CD4-positive, alpha-beta T cell (primary cell): ENCODE measurements at regions of chr1 and their contacts with region 1.

Region 1: DNA sequence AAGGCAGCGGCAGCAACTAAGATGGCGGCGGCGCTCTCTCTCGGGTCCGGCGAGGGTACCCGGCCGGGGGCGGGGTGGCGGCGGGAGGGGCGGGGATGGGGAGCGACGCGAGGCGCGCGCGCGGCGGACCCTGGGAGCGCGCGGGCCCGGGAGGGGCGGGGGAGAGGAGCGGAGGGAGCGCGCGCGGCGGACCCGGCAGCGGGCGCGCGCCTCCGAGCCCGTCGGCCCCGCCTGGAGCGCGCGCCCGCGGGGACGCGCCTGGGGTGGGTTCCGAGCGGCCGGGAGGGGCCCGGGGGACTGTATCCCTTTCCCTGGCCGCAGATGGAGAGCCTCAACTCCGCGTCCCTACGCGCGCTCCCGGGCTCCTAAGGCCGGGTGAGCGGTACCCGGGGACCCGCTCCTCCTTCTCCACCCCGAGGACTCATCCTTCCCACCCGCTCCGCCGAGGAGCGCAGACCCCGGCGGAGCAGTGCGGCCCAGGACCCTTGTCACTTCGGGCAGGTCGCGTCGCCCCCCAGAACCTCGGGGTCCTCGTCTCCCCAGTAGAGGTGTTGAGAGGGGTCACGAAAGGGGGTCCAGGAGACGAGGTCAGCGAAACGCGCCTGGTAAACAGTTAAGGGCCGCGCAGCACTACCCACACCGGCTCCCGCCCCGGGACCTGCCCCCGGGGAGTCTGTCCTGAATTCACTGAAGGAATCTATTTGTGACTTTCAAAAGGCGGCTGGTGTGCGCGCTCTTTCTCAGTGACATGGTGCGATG is at the start of gene CLSTN1:
- DNase-seq: peak; percentile 86 to 94 (median 90)
- ATAC-seq: peak; percentile 74
- H3K4me3 ChIP-seq: peak within 1 kb of the TSS; percentile 87
- H3K4me3 Mint-ChIP-seq: peak within 1 kb of the TSS; percentile 99
- H3K27ac ChIP-seq: peak within 1 kb of the TSS; percentile 57 to 67
- H3K27ac Mint-ChIP-seq: peak within 1 kb of the TSS; percentile 94
- H3K4me1 ChIP-seq: peaks cover 40% of the 10 kb centered on the region
- H3K4me1 Mint-ChIP-seq: peaks cover 43% of the 10 kb centered on the region
- H3K27me3 ChIP-seq: no peaks in the 10 kb centered on the region
- H3K27me3 Mint-ChIP-seq: no peaks in the 10 kb centered on the region
- CTCF ChIP-seq: no peak
- total RNA-seq, gene CLSTN1: 66.8 to 68.1 TPM

Region 2: DNA sequence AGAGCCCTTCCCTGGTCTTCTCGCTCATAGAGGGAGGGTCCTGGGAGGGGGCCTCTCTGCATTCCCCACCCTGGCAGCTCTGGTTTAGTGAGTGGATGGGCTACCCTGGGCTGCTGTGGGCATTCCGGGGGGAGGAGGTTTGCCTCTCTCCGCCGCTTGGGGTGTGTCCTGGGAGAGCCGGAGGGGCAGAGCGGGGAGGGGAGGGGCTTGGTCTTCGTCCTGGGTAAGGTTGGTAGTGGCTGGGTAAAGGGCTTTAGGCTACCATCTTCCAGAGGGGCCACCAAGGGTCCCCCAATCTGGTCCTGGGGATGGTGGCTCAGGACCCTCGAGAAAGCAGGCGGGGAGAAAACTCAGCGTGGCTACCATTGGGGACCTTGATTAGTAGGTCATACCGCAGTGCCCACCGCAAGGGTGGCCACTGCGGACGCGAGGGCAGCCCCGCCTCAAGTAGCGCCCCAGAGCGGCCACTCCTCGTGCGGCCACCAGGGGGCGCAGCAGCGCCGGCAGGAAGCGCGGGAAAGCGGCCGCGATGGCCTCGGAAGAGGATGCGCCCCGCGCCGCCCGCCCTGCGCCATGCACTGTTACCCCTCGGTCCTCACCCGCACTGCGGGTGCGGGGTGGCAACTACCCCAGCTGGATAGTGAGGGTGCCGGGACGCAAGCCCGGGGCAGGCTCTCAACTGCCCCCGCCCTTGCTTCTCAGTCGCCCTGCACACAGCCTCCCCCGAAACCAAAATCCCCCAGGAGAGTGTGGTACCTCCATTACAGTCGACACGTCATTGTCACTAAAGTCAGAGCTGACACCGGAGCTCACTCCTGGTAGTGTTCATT is 329.0 kb before region 1 on chr1:
- CTCF ChIA-PET with region 1: no interaction called
- POLR2A ChIA-PET with region 1: no interaction called
- intact Hi-C with region 1: no loop called
- DNase-seq: peak; percentile 40 to 86 (median 57)
- ATAC-seq: peak; percentile 86
- H3K4me3 ChIP-seq: peak overlapping the region; percentile 43
- H3K4me3 Mint-ChIP-seq: peak overlapping the region; percentile 72
- H3K27ac ChIP-seq: no peak overlapping the region
- H3K27ac Mint-ChIP-seq: no peak overlapping the region
- H3K4me1 ChIP-seq: peaks cover 13% of the 10 kb centered on the region
- H3K4me1 Mint-ChIP-seq: peaks cover 6% of the 10 kb centered on the region
- H3K27me3 ChIP-seq: no peaks in the 10 kb centered on the region
- H3K27me3 Mint-ChIP-seq: peaks cover 4% of the 10 kb centered on the region
- CTCF ChIP-seq: peak; percentile 93

Region 3: DNA sequence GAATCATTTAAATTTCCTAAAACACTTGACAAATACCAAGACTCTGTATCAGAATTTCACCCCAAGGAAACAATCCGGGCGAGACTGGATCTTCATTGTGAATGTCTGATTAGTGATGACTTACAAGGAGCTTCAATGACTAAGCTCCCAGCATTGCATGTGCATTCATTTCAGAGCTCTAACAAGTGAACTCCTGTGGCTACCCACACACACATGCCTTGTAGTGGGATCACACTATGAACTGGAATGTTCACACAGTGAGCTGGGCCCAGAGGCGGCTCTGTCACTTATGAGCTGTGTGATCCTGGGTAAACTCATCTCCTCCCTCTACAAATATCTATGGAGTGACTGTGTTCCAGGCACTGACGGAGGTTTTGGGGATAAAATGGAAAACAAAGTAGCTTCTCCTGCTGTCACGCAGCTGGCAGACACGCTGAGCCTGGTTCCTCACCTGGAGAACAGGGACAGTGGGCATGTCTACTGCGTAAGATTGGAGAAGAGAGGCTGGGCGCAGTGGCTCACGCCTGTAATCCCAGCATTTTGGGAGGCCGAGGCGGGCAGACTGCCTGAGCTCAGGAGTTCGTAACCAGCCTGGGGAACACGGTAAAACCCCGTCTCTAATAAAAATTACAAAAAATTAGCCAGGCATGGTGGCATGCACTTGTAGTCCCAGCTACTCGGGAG is 57.2 kb before region 1 on chr1:
- CTCF ChIA-PET with region 1: no interaction called
- POLR2A ChIA-PET with region 1: no interaction called
- intact Hi-C with region 1: no loop called
- DNase-seq: no peak
- ATAC-seq: no peak
- H3K4me3 ChIP-seq: no peak overlapping the region
- H3K4me3 Mint-ChIP-seq: no peak overlapping the region
- H3K27ac ChIP-seq: no peak overlapping the region
- H3K27ac Mint-ChIP-seq: no peak overlapping the region
- H3K4me1 ChIP-seq: peaks cover 3% of the 10 kb centered on the region
- H3K4me1 Mint-ChIP-seq: peaks cover 29% of the 10 kb centered on the region
- H3K27me3 ChIP-seq: no peaks in the 10 kb centered on the region
- H3K27me3 Mint-ChIP-seq: no peaks in the 10 kb centered on the region
- CTCF ChIP-seq: no peak

Region 4: DNA sequence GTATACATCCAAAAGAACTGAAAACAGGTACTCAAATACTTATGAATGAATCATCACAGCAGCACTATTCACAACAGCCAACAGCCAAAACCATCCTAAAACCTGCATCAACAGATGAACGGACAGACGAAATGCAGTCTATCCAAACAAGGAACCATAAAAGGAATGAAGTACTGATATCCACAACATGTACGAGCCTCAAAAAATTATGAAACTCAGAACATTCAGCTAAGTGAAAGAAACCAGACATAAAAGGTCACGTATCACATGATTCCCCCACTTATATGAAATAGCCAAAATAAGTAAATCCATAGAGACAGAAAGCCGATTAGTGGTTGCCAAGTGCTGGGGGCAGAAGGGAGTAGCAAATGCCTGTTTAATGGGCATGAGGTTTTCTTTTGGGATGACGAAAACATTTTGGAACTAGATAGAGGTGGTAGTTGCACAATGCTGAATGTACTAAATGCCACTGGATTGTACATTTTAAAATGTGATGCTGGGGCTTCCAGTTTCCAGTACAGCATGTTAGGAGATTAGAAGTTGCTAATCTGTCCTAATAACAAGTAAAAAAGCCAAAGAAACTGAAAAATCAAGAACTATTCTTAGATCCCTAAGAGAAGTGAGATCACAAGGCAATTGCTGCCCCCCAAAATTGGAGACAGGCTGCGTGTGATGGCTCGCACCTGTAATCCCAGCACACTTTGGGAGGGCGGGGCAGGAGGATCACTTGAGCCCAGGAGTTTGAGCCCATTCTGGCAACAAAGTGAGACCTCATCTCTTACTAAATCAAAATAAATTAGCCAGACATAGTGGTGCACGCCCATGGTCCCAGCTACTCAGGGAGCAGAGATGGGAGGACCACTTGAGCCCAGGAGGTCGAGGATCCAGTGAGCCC is 25.6 kb before region 1 on chr1:
- CTCF ChIA-PET with region 1: no interaction called
- POLR2A ChIA-PET with region 1: interaction called, 11 read pairs
- intact Hi-C with region 1: no loop called
- DNase-seq: no peak
- ATAC-seq: no peak
- H3K4me3 ChIP-seq: no peak overlapping the region
- H3K4me3 Mint-ChIP-seq: peak overlapping the region; percentile 49
- H3K27ac ChIP-seq: no peak overlapping the region
- H3K27ac Mint-ChIP-seq: peak overlapping the region; percentile 57
- H3K4me1 ChIP-seq: peaks cover 43% of the 10 kb centered on the region
- H3K4me1 Mint-ChIP-seq: peaks cover 68% of the 10 kb centered on the region
- H3K27me3 ChIP-seq: no peaks in the 10 kb centered on the region
- H3K27me3 Mint-ChIP-seq: no peaks in the 10 kb centered on the region
- CTCF ChIP-seq: no peak